ENCODE measurements at regions of chr5 and their contacts with region 1.

Region 1: DNA sequence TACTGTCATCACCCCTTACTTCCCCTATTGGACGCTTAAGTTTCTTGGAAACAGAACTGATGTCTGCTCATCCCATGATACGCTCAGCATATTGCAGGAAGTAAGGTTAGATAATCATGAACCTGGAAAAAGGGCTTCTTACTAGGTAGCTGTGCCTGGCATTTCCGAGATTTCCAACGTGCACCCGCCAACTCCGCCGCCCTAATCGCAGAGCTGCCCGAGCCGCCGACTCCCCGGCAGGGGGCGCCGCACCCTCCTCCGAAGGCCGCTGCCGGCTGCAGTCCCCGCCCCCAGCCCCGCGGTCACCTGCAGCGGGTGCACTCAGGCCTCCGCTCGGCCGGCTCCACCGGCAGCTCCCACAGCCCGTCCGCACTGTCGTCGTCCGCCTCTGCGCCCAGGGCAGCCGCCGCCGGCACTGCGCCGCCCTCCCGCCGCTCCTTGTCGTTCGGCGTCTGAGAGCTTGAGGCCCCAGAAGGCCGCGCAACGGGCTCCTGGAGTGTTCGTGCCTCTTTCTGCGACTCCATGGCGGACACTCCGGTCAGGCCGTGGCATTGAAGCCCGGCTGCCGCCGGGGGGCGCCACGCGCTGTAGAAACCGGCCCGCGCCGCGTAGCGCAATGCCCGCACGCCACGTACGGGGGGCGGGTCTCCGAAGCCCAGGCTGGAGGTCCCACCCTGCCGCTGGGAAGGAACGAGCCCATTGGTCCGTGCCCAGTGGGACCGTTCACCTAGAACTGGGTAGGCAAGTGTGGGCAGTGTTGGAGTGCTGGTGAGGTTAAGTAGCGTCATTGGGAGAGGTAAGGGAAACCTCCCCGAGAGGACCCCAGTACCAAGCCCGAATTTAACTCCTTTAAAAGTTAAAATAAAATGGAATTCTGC is at the start of gene DTWD2:
- DNase-seq: peak; percentile 93
- ATAC-seq: peak; percentile 96
- H3K4me3 Mint-ChIP-seq: peak within 1 kb of the TSS; percentile 77
- H3K27ac Mint-ChIP-seq: peak within 1 kb of the TSS; percentile 67
- H3K4me1 Mint-ChIP-seq: peaks cover 13% of the 10 kb centered on the region
- H3K27me3 Mint-ChIP-seq: no peaks in the 10 kb centered on the region
- total RNA-seq, gene DTWD2: 2.6 to 3.3 TPM

Region 2: DNA sequence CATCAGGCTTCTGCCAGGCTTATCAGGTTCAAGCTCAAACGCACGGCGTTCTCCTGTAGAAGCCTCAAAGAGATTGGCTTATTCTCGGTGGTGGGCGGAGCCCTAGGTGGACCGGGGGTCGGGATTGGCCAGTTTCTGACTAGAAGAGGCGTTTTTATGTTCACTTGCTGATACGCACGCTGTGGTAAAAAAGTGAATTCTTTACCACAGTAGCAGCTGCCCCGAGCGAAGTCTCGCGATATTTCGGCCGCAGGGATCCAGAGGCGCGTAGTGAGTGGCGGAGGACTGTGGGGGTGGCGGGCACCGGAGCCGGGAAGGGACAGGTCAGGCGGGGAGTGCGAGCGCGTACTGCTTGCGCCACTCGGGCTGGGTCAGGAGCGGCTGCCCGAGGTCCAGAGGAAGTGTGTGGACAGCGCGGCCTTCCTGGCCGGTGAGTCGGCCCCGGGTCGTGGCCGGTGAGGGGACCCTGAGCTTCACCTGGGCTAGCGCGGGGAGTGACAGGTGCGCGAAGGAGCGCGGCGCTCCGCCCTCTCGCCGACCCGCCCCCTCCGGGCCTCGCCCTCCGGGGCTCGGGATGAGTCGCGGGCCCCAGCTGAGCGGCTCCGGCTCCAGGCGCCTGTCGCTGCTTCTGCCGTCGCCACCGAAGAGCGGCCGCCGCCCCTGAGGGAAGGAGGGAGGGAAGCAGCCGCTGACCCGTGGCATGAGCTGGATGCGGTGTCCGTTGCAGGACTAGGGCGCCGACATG is 82.8 kb after region 1 on chr5 and contains the start of gene DMXL1:
- CTCF ChIA-PET with region 1: interaction called, 19 read pairs
- POLR2A ChIA-PET with region 1: interaction called, 3 read pairs
- DNase-seq: peak; percentile 99
- ATAC-seq: peak; percentile 91
- H3K4me3 Mint-ChIP-seq: peak within 1 kb of the TSS; percentile 95
- H3K27ac Mint-ChIP-seq: peak within 1 kb of the TSS; percentile 96
- H3K4me1 Mint-ChIP-seq: peaks cover 36% of the 10 kb centered on the region
- H3K27me3 Mint-ChIP-seq: no peaks in the 10 kb centered on the region
- total RNA-seq, gene DMXL1: 32.3 to 33.9 TPM

Region 3: GRCh38 chr5:119238265-119239118 is 250.3 kb after region 1 on chr5:
- CTCF ChIA-PET with region 1: interaction called, 12 read pairs
- POLR2A ChIA-PET with region 1: no interaction called
- DNase-seq: no peak
- ATAC-seq: no peak
- H3K4me3 Mint-ChIP-seq: no peak overlapping the region
- H3K27ac Mint-ChIP-seq: no peak overlapping the region
- H3K4me1 Mint-ChIP-seq: peaks cover 16% of the 10 kb centered on the region
- H3K27me3 Mint-ChIP-seq: no peaks in the 10 kb centered on the region

Region 4: DNA sequence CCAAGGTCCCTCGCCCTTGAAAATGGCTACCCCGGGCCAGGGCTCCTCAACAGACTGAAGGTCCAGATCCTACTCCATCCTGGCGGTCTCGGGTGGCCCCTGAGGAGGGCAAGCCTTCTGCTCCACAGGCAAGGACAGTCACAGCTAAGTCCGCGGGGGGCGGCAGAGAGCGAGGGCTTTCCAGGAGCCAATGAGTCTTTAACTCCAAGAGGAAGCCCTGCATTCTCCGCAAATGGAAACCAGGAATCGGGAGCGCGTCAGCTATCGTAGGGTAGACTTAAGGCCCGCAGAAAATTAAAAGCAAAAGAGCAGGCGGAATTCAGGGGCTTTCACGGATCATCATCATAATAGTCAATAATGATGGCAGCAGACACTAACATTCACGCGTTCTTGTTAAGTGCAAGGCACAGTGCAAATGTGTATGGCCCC is 279.7 kb after region 1 on chr5:
- CTCF ChIA-PET with region 1: interaction called, 34 read pairs
- POLR2A ChIA-PET with region 1: interaction called, 4 read pairs
- DNase-seq: peak; percentile 94
- ATAC-seq: peak; percentile 70
- H3K4me3 Mint-ChIP-seq: peak overlapping the region; percentile 98
- H3K27ac Mint-ChIP-seq: peak overlapping the region; percentile 96
- H3K4me1 Mint-ChIP-seq: peaks cover 56% of the 10 kb centered on the region
- H3K27me3 Mint-ChIP-seq: no peaks in the 10 kb centered on the region

Region 5: GRCh38 chr5:119315516-119315949 is 327.3 kb after region 1 on chr5:
- CTCF ChIA-PET with region 1: interaction called, 24 read pairs
- POLR2A ChIA-PET with region 1: interaction called, 3 read pairs
- DNase-seq: peak; percentile 74
- ATAC-seq: peak; percentile 77
- H3K4me3 Mint-ChIP-seq: peak overlapping the region; percentile 40
- H3K27ac Mint-ChIP-seq: peak overlapping the region; percentile 87
- H3K4me1 Mint-ChIP-seq: peaks cover 94% of the 10 kb centered on the region
- H3K27me3 Mint-ChIP-seq: no peaks in the 10 kb centered on the region

Region 6: GRCh38 chr5:119418531-119419116 is 430.4 kb after region 1 on chr5:
- CTCF ChIA-PET with region 1: interaction called, 129 read pairs
- POLR2A ChIA-PET with region 1: no interaction called
- DNase-seq: no peak
- ATAC-seq: no peak
- H3K4me3 Mint-ChIP-seq: no peak overlapping the region
- H3K27ac Mint-ChIP-seq: no peak overlapping the region
- H3K4me1 Mint-ChIP-seq: peaks cover 15% of the 10 kb centered on the region
- H3K27me3 Mint-ChIP-seq: no peaks in the 10 kb centered on the region

Measured in activated CD8-positive, alpha-beta T cell treated with anti-CD3 and anti-CD28 coated beads, Interleukin-2, amount 10 ng/mL, durations not matched to agents 7 days and 5 days (primary cell).